AG04449 (cell line): ENCODE measurements at regions of chr11 and their contacts with region 1.

Region 1: DNA sequence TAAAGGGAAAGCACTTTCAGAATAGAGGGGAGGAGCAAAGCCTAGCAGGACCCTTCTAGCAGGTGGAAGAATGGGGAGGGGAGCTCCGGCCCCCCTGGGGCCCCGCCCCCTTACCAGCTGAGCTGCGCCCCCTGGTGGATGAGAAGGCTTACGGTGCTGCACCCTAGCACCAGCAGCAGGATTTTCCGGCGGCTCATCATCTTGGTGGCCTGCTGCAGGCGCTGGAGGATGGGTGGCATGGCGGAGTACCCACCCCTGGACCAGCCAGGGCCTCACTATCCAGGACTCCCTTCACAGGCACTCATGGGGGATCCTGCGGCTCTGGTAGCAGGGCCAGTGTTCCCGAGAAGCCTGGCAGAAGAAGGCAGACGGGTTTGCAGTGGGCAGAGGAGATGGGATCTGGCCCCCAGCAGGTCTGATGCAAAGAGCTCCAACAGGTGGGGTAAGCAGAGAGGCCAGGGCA is 3.8 kb downstream of the GAL3ST3 start:
- DNase-seq: no peak
- H3K4me3 ChIP-seq: no peak overlapping the region
- CTCF ChIP-seq: peak; percentile 93

Region 2: DNA sequence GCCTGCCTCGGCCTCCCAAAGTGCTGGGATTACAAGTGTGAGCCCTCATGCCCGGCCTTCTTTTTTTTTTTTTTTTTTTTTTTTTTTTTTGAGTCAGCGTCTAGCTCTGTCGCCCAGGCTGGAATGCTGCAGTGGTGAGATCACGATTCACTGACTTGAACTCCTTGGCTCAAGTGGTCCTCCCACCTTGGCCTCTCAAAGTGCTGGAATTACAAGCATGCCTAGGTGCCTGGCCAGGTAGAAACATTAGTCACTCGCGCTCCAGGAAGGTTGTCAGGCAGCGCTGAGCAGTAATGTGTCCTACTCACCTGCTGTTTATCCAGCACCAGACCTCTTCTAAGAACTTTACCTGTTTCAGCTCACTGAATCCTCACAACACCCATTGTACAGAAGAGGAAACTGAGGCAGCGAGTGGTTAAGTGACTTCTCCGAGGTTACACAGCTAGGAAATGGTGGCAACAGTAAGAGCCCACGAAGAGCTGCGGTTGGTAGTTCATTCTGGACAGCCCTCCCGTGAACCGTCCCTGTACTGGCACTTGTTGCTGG is 33.9 kb before region 1 on chr11:
- CTCF ChIA-PET with region 1: interaction called, 13 read pairs
- POLR2A ChIA-PET with region 1: no interaction called
- DNase-seq: no peak
- H3K4me3 ChIP-seq: no peak overlapping the region
- CTCF ChIP-seq: no peak

Region 3: DNA sequence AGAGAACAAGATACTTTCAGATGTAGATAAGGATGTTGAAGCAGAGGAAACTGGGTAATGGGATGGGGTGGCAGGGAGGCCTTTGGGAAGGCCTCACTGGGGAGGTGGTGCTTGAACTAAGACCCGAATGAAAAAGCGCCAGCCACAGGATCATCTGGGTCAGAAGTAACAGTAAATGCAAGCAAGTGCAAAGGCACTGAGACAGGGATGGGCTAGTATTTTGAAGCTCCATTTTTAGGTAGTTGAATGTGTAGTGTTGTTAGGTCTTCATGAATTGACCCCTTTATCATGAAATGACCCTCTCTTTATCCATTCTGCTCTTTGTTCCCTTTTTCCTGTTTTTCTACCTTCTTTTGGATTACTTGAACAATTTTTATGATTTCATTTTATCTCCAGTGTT is 18.7 kb after region 1 on chr11:
- CTCF ChIA-PET with region 1: interaction called, 345 read pairs
- POLR2A ChIA-PET with region 1: no interaction called
- DNase-seq: no peak
- H3K4me3 ChIP-seq: no peak overlapping the region
- CTCF ChIP-seq: no peak

Region 4: DNA sequence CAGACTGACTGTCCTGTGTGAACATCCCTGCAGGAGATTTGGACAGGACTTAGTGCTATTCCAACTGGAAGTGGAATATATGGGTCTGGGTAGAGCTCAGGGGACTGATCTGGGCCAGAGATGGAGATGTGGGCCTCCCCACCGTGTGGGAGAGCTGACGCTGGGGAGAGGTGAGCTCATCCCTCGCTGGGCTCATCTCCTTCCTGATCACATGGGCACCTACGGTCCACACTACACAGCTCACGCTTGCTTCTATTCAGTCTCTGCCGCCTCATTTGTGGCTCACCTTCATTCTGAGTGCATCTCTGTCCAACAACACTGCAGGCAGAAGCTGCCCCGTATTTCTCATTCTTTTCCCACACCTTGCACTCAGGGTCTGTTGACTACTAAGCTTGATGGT is 206.6 kb after region 1 on chr11:
- CTCF ChIA-PET with region 1: no interaction called
- POLR2A ChIA-PET with region 1: no interaction called
- DNase-seq: no peak
- H3K4me3 ChIP-seq: no peak overlapping the region
- CTCF ChIP-seq: no peak